Left lung (tissue), 14 donors: ENCODE measurements at regions of chr11 and their contacts with region 1.

Region 1: DNA sequence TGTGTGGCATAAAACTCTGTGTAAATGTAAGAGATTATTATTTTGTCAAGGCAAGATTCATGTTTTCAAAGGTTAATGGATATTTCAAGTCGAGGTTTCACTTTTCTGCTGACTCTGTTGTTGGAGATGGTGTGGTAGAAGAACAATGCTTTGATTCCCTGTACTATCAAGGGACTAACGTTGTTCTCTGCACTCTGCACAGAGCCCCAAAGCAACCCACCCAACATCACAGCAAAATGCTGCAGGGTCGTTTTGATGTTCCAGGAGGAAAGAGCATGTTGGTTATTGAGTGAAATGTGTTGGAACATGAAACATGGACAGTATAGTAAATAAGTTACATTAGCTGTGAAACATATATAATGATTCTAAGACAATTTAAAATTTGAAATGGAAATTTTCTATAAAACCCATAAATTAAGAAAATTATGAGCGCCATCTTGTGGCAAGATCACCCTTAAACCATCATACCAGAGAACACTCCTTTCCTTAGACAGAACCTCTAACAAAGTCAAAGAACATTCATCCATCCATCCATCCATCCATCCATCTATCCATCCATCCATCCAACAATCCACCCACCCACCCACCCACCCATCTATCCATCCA is 164.4 kb upstream of the ZBED5 start:
- DNase-seq: peak in 2 of 4 donors; percentile 15 to 37
- ATAC-seq: peak; percentile 62
- H3K4me3 ChIP-seq: no peak overlapping the region
- H3K27ac ChIP-seq: no peak overlapping the region
- H3K4me1 ChIP-seq: no peaks in the 10 kb centered on the region
- H3K27me3 ChIP-seq: no peaks in the 10 kb centered on the region
- CTCF ChIP-seq: peak; percentile 15 to 46

Region 2: GRCh38 chr11:10792398-10792975 is 229.7 kb before region 1 on chr11:
- intact Hi-C with region 1: loop called in 1 of 2 experiments (anchors 5 kb)
- DNase-seq: peak; percentile 60 to 99 (median 86)
- ATAC-seq: peak; percentile 99
- H3K4me3 ChIP-seq: no peak overlapping the region
- H3K27ac ChIP-seq: no peak overlapping the region
- H3K4me1 ChIP-seq: peaks cover 0 to 20% of the 10 kb centered on the region in 2 donors
- H3K27me3 ChIP-seq: no peaks in the 10 kb centered on the region
- CTCF ChIP-seq: peak; percentile 88 to 90

Region 3: GRCh38 chr11:10933455-10934292 is 88.6 kb before region 1 on chr11:
- intact Hi-C with region 1: loop called in 1 of 2 experiments (anchors 5 kb)
- DNase-seq: peak; percentile 90 to 95 (median 91)
- ATAC-seq: peak; percentile 90
- H3K4me3 ChIP-seq: peak overlapping the region; percentile 16 to 34
- H3K27ac ChIP-seq: peak overlapping the region; percentile 72 to 79
- H3K4me1 ChIP-seq: peaks cover 4 to 25% of the 10 kb centered on the region in 2 donors
- H3K27me3 ChIP-seq: peaks cover 0 to 41% of the 10 kb centered on the region in 2 donors
- CTCF ChIP-seq: peak; percentile 95 to 97